ENCODE measurements at regions of chr13 and their contacts with region 1.

Region 1: GRCh38 chr13:31485651-31486051 is 253.7 kb upstream of the RXFP2 start:
- DNase-seq: no peak
- H3K4me3 ChIP-seq: no peak overlapping the region
- H3K27ac ChIP-seq: no peak overlapping the region
- H3K4me1 ChIP-seq: no peaks in the 10 kb centered on the region
- H3K27me3 ChIP-seq: no peaks in the 10 kb centered on the region; the same call in 1 of the 2 replicates
- CTCF ChIP-seq: no peak

Region 2: GRCh38 chr13:31250435-31250834 is 235.2 kb before region 1 on chr13:
- CTCF ChIA-PET with region 1: interaction called, 14 read pairs
- POLR2A ChIA-PET with region 1: no interaction called
- intact Hi-C with region 1: no loop called
- DNase-seq: no peak
- H3K4me3 ChIP-seq: no peak overlapping the region
- H3K27ac ChIP-seq: no peak overlapping the region
- H3K4me1 ChIP-seq: no peaks in the 10 kb centered on the region
- H3K27me3 ChIP-seq: no peaks in the 10 kb centered on the region
- CTCF ChIP-seq: no peak